ENCODE measurements at regions of chr18 and their contacts with region 1.

Region 1: DNA sequence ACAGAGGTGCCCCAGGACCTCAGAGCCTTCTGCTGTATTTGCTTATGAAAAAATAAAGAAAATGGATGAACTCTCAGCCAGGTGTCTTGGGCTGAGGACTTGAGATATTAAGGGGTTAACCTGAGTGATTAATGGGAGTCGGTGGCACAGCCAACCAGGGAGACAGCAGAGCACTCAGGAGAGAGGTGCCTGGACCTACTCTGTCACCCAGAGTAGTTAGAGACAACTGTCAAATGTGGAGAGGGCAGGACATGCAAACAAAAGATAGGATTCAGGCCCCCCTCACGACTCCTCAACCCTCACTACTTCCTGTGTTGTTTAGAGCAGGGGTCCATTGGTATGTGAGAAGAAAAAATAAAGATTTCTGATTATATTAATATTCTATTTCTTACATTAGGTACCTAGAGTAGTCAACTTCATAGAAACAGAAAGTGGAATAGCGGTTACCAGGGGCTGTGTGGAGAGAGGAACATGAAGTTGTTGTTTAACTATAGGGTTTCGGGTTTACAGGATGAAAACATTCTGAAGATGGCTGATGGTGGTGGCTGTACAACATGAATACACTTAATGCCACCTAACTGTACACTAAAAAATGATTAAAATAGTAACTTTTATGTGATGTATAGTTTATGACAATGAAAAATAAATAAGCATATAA is 28.6 kb upstream of the CETN1 start:
- DNase-seq: no peak
- H3K4me3 ChIP-seq: no peak overlapping the region
- H3K27ac ChIP-seq: no peak overlapping the region
- H3K4me1 ChIP-seq: no peaks in the 10 kb centered on the region
- H3K27me3 ChIP-seq: peaks cover 31% of the 10 kb centered on the region
- CTCF ChIP-seq: no peak

Region 2: DNA sequence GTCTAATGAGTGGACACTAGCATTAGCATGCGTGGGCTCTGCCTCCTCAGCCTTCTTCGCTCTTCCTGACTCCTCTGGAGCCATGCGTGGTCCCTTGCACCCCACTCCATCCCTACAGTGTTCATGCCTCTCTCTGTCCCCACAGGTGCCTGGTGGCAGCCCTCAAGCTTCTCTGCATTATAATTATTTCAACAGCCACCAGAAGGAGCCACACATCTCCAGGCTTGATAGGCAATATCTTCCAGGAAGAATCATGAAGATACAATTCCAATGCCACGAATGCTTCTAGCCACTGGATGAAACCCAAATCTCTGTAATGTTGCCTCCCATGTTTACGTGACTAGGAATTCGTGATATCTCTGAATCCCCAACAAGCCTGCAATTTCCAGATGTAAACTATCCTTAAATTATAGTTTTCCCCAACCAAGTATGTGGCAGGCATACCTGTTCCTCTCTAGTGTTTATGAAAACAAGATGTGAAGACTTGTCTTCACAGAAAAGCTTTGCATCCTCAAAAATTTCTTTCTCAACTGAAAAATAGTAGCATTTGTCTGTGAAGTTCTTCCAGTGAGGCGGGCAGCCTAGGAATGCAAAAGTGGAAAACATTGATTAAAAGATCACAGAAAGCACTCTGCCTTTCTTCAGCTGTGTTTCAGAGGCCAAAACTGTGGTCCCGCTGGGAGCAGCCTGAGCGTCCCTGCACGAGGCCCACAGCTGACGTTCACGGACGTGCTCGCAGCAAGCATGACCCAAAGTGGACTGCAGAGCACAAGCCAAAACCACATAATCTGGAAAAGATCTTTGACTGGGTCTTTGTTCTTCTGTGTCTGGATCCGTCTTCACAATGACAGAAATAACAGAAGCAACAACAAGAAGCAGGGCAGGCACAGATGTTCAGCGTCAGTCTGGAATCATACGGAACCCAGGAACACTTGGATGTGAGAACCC is 218.7 kb before region 1 on chr18:
- CTCF ChIA-PET with region 1: no interaction called
- POLR2A ChIA-PET with region 1: interaction called, 10 read pairs
- intact Hi-C with region 1: no loop called
- DNase-seq: no peak
- H3K4me3 ChIP-seq: no peak overlapping the region
- H3K27ac ChIP-seq: no peak overlapping the region
- H3K4me1 ChIP-seq: no peaks in the 10 kb centered on the region
- H3K27me3 ChIP-seq: peaks cover 98% of the 10 kb centered on the region
- CTCF ChIP-seq: no peak

Region 3: DNA sequence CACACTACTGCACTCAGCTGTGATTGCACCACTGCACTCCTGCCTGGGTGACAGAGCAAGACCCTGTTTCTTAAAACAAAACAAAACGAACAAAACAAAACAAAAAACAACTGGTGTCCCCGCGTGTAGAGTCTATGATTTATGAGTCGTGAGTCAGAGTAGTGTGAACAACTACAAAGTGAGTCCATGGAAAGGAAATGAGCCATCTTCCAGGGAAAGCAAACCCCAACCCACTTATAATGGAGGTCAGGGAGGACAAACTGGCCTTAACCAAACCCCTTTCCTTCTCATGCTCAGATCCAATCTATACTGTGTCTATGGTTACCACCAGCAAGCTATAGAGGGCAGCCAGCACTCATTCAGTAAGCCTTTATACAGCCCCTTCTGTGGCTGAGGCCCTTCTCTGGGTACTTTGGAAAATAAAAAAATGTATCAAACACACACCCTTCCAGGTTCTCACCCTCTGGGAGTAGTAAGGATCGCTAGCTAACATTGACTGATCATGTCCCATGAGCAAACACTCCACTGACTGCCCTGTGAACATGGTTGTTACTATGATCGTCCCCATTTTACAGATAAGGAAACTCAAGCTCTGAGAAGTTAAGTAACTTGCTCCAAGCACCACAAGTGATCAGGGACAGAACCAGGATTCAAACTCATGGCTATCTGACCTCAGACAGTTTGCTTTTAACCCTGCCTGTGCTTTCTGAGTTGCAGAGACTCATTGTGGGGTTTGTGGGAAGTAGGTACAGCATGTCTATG is 26.3 kb before region 1 on chr18:
- CTCF ChIA-PET with region 1: no interaction called
- POLR2A ChIA-PET with region 1: no interaction called
- intact Hi-C with region 1: loop called (anchors 1 kb)
- DNase-seq: no peak
- H3K4me3 ChIP-seq: no peak overlapping the region
- H3K27ac ChIP-seq: no peak overlapping the region
- H3K4me1 ChIP-seq: no peaks in the 10 kb centered on the region
- H3K27me3 ChIP-seq: peaks cover 42% of the 10 kb centered on the region
- CTCF ChIP-seq: no peak

Region 4: GRCh38 chr18:703213-703967 is 151.9 kb after region 1 on chr18:
- CTCF ChIA-PET with region 1: no interaction called
- POLR2A ChIA-PET with region 1: no interaction called
- intact Hi-C with region 1: no loop called
- DNase-seq: peak in 1 of 2 experiments; percentile 57
- H3K4me3 ChIP-seq: no peak overlapping the region
- H3K27ac ChIP-seq: peak overlapping the region; percentile 73
- H3K4me1 ChIP-seq: peaks cover 23% of the 10 kb centered on the region
- H3K27me3 ChIP-seq: no peaks in the 10 kb centered on the region
- CTCF ChIP-seq: no peak